ENCODE measurements at regions of chr7 and their contacts with region 1.

Region 1: DNA sequence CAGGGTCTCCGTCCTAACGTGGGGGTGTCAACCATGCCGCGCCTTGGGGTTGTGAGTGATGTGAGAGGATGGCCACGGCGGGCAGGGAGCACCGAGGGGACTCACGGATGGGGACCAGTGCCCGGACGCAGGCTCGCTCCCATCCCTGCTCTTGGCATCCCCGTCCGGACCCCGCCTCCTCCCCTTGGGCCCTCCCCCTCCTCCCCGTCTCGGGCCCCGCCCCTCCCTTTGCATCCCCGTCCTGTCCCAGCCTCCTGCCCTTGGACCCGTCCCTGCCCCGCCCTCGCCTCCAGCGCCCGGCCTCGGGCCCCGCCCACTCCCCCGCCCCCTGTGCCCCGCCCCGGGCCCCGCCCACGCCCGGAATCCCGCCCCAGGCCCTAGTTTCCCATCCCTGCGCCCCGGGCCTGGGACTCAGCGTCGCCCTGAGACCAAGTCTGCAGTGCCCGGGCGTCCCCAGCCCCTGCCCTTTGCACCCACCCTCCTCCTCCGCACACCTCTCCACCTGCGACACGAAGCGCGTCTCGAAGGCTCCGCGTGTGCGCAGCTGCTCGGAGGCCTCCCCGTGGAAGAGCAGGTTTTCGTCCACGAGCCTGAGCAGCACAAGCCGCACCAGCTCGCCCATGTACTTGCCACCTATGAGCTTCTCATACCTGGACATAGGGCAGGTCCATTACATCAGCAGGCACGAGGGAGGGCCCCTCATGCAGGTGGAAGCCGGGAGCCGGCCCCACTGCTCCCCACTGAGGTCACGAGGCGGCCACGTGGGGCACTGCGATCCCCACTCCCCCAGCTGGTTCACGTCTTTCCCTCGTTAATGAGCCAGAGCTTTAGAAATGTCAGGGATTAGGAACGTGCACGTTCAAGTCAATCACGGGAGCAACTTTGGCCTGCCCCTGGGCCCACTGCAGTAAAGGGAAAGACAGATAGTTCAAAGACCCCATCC is 5.1 kb upstream of the MYL7 start:
- DNase-seq: peak; percentile 70
- H3K4me3 Mint-ChIP-seq: peak overlapping the region; percentile 80
- H3K27ac Mint-ChIP-seq: no peak overlapping the region
- H3K4me1 Mint-ChIP-seq: peaks cover 6% of the 10 kb centered on the region
- H3K27me3 Mint-ChIP-seq: peaks cover 6% of the 10 kb centered on the region

Region 2: GRCh38 chr7:43942997-43943704 is 203.1 kb before region 1 on chr7:
- intact Hi-C with region 1: no loop called
- DNase-seq: no peak
- H3K4me3 Mint-ChIP-seq: no peak overlapping the region
- H3K27ac Mint-ChIP-seq: no peak overlapping the region
- H3K4me1 Mint-ChIP-seq: no peaks in the 10 kb centered on the region
- H3K27me3 Mint-ChIP-seq: no peaks in the 10 kb centered on the region

Region 3: DNA sequence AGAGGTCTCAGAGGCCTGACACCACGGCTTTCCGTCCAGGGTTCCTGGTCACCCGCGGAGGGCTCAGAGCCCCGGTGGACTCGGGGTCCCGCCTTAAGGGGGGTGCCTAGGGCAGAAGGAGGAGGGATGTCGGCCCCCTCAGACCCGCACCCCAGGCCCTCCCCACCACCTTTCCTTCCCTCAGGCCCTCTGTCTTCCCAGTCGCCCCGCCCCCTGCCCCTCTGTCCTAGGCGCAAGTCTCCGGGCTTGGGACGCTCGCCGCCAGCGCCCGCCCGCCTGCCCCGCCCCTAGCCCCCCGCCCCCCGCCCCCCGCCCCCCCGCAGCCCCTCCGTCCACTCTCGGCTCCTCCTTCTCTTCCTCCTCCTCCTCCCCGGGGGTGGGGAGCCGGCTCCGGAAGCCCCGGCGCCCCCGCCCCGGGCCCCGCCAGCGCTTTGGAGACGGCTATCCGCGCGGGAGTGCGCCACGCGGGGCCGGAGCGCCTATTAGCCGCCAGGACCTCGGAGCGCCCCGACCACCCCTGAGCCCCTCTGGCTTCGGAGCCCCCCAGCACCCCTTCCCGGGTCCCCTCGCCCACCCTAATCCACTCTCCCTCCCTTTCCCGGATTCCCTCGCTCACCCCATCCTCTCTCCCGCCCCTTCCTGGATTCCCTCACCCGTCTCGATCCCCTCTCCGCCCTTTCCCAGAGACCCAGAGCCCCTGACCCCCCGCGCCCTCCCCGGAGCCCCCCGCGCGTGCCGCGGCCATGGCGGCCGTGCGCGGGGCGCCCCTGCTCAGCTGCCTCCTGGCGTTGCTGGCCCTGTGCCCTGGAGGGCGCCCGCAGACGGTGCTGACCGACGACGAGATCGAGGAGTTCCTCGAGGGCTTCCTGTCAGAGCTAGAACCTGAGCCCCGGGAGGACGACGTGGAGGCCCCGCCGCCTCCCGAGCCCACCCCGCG is 42.0 kb before region 1 on chr7 and contains the start of gene AEBP1:
- intact Hi-C with region 1: no loop called
- DNase-seq: no peak
- H3K4me3 Mint-ChIP-seq: peak within 1 kb of the TSS; percentile 75
- H3K27ac Mint-ChIP-seq: no peak within 1 kb of the TSS
- H3K4me1 Mint-ChIP-seq: peaks cover 10% of the 10 kb centered on the region
- H3K27me3 Mint-ChIP-seq: peaks cover 20% of the 10 kb centered on the region
- total RNA-seq, gene AEBP1: 17.0 and 17.2 TPM in 2 replicates

Region 4: GRCh38 chr7:44257618-44258422 is 111.6 kb after region 1 on chr7:
- intact Hi-C with region 1: loop called (anchors 5 kb)
- DNase-seq: peak; percentile 69
- H3K4me3 Mint-ChIP-seq: peak overlapping the region; percentile 56
- H3K27ac Mint-ChIP-seq: peak overlapping the region; percentile 78
- H3K4me1 Mint-ChIP-seq: peaks cover 34% of the 10 kb centered on the region
- H3K27me3 Mint-ChIP-seq: no peaks in the 10 kb centered on the region

Measured in activated T-helper 1 cell treated with anti-CD3 and anti-CD28 coated beads, Interleukin-12 subunit alpha, Interleukin-12 subunit beta, Interleukin-2, Interleukin-4 antibody, amounts not matched to agents 30 ng/mL and 10 ng/mL and 1 ng/mL, durations not matched to agents 14 hours and 24 hours and 36 hours (primary cell).